ENCODE measurements at regions of chr12 and their contacts with region 1.

Region 1: GRCh38 chr12:96399919-96400797 is at the start of gene CDK17:
- DNase-seq: peak; percentile 83 to 92 (median 86)
- ATAC-seq: peak; percentile 65 to 93 (median 86)
- H3K4me3 ChIP-seq: peak within 1 kb of the TSS; percentile 59 to 98 (median 88)
- H3K27ac ChIP-seq: peak within 1 kb of the TSS; percentile 97 to 100 (median 99)
- H3K4me1 ChIP-seq: peaks cover 5 to 43% (median 25%) of the 10 kb centered on the region in 12 donors
- H3K27me3 ChIP-seq: no peaks in the 10 kb centered on the region
- CTCF ChIP-seq: peak; percentile 15 to 78 (median 56)
- POLR2A ChIP-seq: peak in 1 of 2 donors; percentile 64
- total RNA-seq, gene CDK17: 14.3 to 31.7 (median 23.1) TPM

Region 2: DNA sequence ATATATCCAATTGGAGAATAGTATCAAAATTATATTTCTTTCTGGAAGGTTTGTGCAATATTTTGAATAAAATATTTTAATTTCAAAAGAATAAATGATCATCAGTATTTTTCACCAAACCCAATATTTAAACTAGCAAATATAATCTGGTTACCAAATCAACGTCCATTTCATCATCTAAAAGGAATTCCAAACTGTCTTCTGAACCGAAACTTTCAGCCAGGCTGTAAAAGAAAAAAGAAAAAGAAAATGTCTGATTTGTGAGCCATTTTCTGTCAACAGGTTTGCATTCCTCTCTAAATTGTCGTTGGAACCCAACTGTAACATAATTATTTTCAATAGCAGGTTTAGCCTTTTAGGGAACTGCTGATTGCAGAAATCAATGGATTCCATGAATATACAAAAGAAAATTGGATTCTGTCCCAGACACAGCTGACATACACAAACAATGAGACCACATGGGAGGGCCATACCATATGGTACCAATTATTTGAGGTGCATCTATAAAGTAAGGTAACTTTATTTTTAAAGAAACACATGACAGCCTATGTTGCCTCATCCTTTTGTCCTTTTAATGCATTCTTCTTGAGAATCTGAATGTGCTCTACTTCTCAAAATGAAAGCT is 518.7 kb before region 1 on chr12:
- intact Hi-C with region 1: no loop called
- DNase-seq: no peak
- ATAC-seq: no peak
- H3K4me3 ChIP-seq: no peak overlapping the region
- H3K27ac ChIP-seq: no peak overlapping the region
- H3K4me1 ChIP-seq: peaks cover 0 to 12% (median 0%) of the 10 kb centered on the region in 12 donors
- H3K27me3 ChIP-seq: no peaks in the 10 kb centered on the region
- CTCF ChIP-seq: no peak
- POLR2A ChIP-seq: no peak

Region 3: DNA sequence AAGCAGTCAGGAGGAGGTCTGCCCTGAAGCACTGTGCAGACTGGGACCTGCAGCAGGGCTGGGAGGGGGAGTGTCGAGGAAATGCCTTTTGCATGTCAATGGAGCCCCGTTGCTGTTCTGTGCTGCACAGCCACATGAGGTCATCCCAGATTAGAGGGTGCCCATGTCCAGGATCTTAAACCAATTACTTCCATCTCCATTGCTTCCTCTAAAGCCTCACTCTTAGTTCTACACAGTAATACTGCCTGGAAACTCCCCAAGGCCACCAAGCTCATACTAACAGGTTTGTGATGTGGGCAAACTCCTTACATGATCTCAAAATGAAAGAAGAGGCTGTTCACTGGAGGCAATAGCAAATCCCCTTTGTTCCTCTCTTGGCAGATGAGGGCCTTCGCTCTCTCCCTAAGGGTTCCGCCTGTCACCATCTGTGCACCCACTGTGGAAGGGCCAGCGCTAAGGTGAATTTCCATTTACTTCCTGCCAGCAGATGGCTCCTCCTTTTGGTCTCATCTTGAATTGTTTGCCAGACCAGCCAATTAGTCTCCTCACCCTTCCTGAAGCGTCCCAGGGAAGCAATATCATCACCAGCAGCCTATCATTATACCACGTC is 329.4 kb before region 1 on chr12:
- intact Hi-C with region 1: loop called in 7 of 10 experiments (anchors 5 to 10 kb)
- DNase-seq: no peak
- ATAC-seq: peak; percentile 37 to 64 (median 48)
- H3K4me3 ChIP-seq: no peak overlapping the region
- H3K27ac ChIP-seq: peak overlapping the region in 7 of 12 donors; percentile 10 to 46 (median 39)
- H3K4me1 ChIP-seq: peaks cover 0 to 31% (median 9%) of the 10 kb centered on the region in 12 donors
- H3K27me3 ChIP-seq: peaks cover 0 to 4% (median 0%) of the 10 kb centered on the region in 9 donors
- CTCF ChIP-seq: peak in 4 of 12 donors; percentile 7 to 34 (median 26)
- POLR2A ChIP-seq: no peak

Region 4: GRCh38 chr12:96285158-96285557 is 115.0 kb before region 1 on chr12:
- intact Hi-C with region 1: loop called in 1 of 10 experiments (anchors 5 kb)
- DNase-seq: no peak
- ATAC-seq: no peak
- H3K4me3 ChIP-seq: no peak overlapping the region
- H3K27ac ChIP-seq: no peak overlapping the region
- H3K4me1 ChIP-seq: no peaks in the 10 kb centered on the region
- H3K27me3 ChIP-seq: no peaks in the 10 kb centered on the region
- CTCF ChIP-seq: no peak
- POLR2A ChIP-seq: no peak

Region 5: GRCh38 chr12:96314723-96315122 is 85.4 kb before region 1 on chr12:
- intact Hi-C with region 1: loop called in 5 of 10 experiments (anchors 2 to 10 kb)
- DNase-seq: no peak
- ATAC-seq: peak in 1 of 4 donors; percentile 46
- H3K4me3 ChIP-seq: no peak overlapping the region
- H3K27ac ChIP-seq: peak overlapping the region in 1 of 12 donors; percentile 4
- H3K4me1 ChIP-seq: peaks cover 0 to 15% (median 5%) of the 10 kb centered on the region in 12 donors
- H3K27me3 ChIP-seq: no peaks in the 10 kb centered on the region
- CTCF ChIP-seq: no peak
- POLR2A ChIP-seq: no peak

Region 6: DNA sequence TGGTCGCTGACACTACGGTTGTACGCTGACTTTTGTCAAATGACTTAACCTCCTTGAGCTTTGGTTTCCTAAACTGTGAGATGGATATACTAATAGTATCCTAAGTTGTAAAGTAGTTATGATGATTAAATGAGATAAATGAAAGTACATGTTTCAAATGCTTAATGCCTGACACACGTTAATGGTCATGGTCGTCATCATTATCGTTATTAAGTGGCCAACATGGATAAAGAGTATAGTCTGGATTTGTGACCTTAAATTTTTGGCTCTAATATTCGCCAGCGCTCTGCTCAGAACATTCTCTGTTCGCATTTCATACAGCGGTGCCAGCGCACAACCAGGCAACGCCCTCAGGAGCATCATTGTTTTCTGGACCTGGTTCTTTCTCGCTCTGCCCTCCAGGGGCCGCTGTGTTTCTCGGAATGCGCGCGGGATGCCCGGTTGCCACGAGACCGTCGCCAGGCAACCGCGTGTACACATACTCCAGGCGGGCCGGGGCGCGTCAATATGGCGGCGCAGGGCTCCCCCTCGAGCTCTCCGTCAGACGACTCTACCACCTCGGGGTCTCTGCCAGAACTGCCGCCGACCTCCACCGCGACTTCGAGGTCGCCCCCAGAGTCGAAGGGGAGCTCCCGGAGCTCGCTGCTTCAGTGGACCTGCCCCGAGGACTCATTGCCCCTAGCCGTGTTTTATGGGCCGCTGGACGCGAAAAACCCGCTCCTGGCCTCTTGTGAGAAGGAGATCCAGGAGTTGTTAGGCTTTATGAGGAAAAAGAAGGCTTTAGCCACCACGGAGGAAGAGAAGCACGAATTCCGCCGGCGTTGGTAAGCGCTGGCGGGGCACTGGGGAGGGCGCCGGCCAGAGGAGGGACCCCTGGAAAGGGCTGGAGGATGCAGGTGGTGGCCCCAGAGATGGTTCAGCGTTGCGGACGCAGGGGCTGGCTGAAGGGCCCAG is 89.2 kb after region 1 on chr12 and contains the start of gene CFAP54:
- intact Hi-C with region 1: loop called in 5 of 10 experiments (anchors 5 to 10 kb)
- DNase-seq: peak; percentile 92 to 96 (median 94)
- ATAC-seq: peak; percentile 86 to 99 (median 99)
- H3K4me3 ChIP-seq: peak within 1 kb of the TSS; percentile 48 to 82 (median 64)
- H3K27ac ChIP-seq: peak within 1 kb of the TSS in 6 of 12 donors; percentile 7 to 81 (median 38)
- H3K4me1 ChIP-seq: peaks cover 0 to 20% (median 3%) of the 10 kb centered on the region in 12 donors
- H3K27me3 ChIP-seq: no peaks in the 10 kb centered on the region
- CTCF ChIP-seq: peak; percentile 73 to 93 (median 88)
- POLR2A ChIP-seq: no peak
- total RNA-seq, gene CFAP54: 0.07 to 0.79 (median 0.16) TPM in 8 of 9 donors, not detected in the other

Region 7: GRCh38 chr12:96516472-96517430 is 116.6 kb after region 1 on chr12:
- intact Hi-C with region 1: loop called in 1 of 10 experiments (anchors 5 kb)
- DNase-seq: peak; percentile 57 to 78 (median 70)
- ATAC-seq: peak in 3 of 4 donors; percentile 63 to 85 (median 79)
- H3K4me3 ChIP-seq: peak overlapping the region in 1 of 12 donors; percentile 2
- H3K27ac ChIP-seq: no peak overlapping the region
- H3K4me1 ChIP-seq: peaks cover 0 to 6% (median 0%) of the 10 kb centered on the region in 12 donors
- H3K27me3 ChIP-seq: no peaks in the 10 kb centered on the region
- CTCF ChIP-seq: peak; percentile 45 to 81 (median 65)
- POLR2A ChIP-seq: no peak

Measured in heart left ventricle (tissue), 16 donors.